ENCODE measurements at regions of chr1 and their contacts with region 1.

Region 1: GRCh38 chr1:66331657-66332547 is 202.1 kb upstream of the SGIP1 start:
- DNase-seq: peak; percentile 89
- H3K4me3 ChIP-seq: peak overlapping the region; percentile 54
- H3K27ac ChIP-seq: peak overlapping the region; percentile 84
- H3K4me1 ChIP-seq: peaks cover 50% of the 10 kb centered on the region
- H3K27me3 ChIP-seq: no peaks in the 10 kb centered on the region
- CTCF ChIP-seq: 0 out of 2 replicates have a peak, but pooled peaks have one; percentile 21

Region 2: GRCh38 chr1:66253330-66253921 is 78.5 kb before region 1 on chr1:
- CTCF ChIA-PET with region 1: interaction called, 3 read pairs
- POLR2A ChIA-PET with region 1: no interaction called
- intact Hi-C with region 1: loop called (anchors 5 kb)
- DNase-seq: peak; percentile 82
- H3K4me3 ChIP-seq: no peak overlapping the region
- H3K27ac ChIP-seq: no peak overlapping the region
- H3K4me1 ChIP-seq: peaks cover 42% of the 10 kb centered on the region
- H3K27me3 ChIP-seq: no peaks in the 10 kb centered on the region
- CTCF ChIP-seq: peak; percentile 81